ENCODE measurements at regions of chr2 and their contacts with region 1.

Region 1: DNA sequence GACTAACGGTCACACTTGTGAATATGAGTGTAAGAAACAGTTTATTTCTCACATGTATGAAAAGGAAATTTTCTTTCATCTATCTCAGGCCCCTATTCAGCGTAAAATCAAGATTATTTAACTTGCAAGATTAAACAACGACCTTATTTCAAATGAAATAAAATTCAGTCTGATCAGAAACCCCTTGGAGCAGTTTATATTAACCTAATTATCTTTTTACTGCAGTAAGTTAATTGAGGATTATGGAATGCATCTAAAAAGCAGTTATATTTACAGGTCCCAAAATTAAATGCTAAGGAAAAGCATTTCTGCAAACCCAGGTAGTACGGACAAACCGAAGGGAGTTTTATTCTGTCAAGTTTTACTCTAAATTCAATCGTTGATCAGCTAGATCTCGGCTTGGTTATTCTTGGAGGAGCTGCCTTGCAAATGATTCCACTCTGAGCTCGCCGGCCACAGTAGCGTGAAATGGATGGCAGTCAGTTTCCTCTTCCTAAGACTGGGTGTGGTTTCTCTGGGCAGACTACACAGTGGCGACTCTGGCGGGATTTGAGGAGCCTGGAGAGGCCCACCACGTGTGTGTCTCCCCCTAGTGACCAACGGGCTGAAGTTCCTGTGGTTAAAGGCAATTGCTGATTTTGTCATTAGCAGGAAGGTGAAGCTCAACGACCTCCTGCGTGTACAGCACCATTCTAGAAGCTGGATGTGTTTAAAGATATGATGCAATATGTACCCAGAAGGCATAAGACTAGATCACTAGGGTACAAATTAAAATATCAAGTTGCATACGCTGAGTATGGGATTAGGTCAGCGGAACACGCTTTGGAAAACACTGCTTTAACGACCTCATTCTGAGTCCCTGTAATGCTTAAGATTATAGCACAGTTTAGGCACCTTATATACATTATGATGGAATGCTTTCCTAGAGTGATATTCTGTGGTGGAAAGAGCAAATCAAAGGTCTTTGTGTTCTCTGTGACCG is 36.4 kb downstream of the PRKRA start:
- DNase-seq: peak; percentile 90
- ATAC-seq: peak; percentile 96
- H3K4me3 ChIP-seq: peak overlapping the region; percentile 60 to 75 (median 65)
- H3K27ac ChIP-seq: no peak overlapping the region
- H3K4me1 ChIP-seq: peaks cover 16% of the 10 kb centered on the region; the same call in 1 of the 2 replicates
- H3K27me3 ChIP-seq: peaks cover 0 to 9% of the 10 kb centered on the region in 2 experiments; a peak in 1 of 5 replicates
- CTCF ChIP-seq: peak; percentile 97
- EP300 ChIP-seq: no peak; a peak in 1 of 4 replicates
- POLR2A ChIP-seq: no peak
- RAD21 ChIP-seq: peak; percentile 86

Region 2: DNA sequence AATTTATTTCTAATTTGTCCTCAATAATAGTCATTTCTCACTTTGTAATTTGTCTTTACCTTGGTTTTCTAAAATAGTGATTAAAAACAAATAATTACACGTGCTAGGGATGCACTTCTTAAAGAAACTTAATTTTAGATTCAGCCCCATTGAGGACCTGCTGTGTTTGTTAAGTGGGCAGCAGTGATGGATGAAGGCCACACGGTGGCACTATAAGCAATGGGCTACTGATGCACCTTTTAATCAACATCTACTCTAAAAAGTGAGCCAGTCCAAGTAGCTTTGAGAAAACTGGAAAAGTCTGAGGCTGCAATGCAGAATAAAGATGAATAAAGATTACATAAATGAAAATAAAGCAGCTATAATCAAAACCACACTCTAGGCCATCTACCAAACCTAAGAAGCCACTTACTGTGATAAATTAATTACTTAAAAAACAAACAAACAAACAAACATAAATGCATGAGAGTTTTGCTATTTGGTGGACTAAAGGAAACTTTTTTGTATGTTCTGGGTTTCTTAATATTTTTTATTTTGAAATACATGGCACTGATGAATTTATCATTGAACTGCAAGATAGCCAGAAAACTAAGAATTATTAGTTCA is 431.3 kb before region 1 on chr2:
- CTCF ChIA-PET with region 1: no interaction called
- POLR2A ChIA-PET with region 1: no interaction called
- in situ Hi-C with region 1: no loop called
- intact Hi-C with region 1: loop called (anchors 5 kb)
- DNase-seq: peak; percentile 53
- ATAC-seq: peak; percentile 90
- H3K4me3 ChIP-seq: no peak overlapping the region
- H3K27ac ChIP-seq: no peak overlapping the region
- H3K4me1 ChIP-seq: no peaks in the 10 kb centered on the region
- H3K27me3 ChIP-seq: no peaks in the 10 kb centered on the region
- CTCF ChIP-seq: peak; percentile 80
- EP300 ChIP-seq: no peak
- POLR2A ChIP-seq: no peak
- RAD21 ChIP-seq: peak; percentile 67

Region 3: GRCh38 chr2:178128836-178129630 is 285.5 kb before region 1 on chr2:
- CTCF ChIA-PET with region 1: interaction called, 6 read pairs
- POLR2A ChIA-PET with region 1: no interaction called
- in situ Hi-C with region 1: no loop called
- intact Hi-C with region 1: loop called (anchors 2 kb)
- DNase-seq: no peak
- ATAC-seq: no peak
- H3K4me3 ChIP-seq: no peak overlapping the region
- H3K27ac ChIP-seq: no peak overlapping the region
- H3K4me1 ChIP-seq: no peaks in the 10 kb centered on the region
- H3K27me3 ChIP-seq: no peaks in the 10 kb centered on the region
- CTCF ChIP-seq: no peak
- EP300 ChIP-seq: no peak
- POLR2A ChIP-seq: no peak
- RAD21 ChIP-seq: no peak

Region 4: DNA sequence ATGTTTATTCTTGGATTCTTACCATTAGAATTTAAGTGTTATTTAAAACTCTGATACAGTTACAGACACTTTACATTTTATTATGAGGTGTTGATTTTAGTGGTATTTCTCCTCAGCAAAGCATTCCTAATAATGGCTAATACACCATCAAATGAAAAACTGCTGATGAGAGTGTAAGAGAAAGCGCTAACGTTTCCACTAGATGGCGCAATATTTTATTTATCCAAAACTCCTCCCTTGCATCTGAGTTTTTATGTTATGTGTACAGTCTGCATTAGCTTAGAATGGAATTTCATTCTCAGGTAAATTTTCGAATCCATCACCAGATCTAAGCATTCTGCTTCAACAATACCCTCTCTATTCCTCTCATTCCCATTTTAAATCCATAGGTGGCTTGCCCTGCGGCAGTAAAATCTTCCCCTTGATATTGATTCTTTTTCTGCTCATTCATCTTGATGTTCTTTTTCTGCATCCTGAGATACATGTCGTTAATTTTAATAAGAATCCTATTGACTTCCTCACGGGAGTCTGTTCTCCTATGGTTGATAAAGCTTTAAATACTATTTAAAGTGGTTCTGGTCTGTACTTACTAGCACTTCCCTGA is 17.5 kb before region 1 on chr2:
- CTCF ChIA-PET with region 1: interaction called, 24 read pairs
- POLR2A ChIA-PET with region 1: interaction called, 3 read pairs
- in situ Hi-C with region 1: no loop called
- intact Hi-C with region 1: loop called (anchors 1 kb)
- DNase-seq: peak; percentile 46
- ATAC-seq: peak; percentile 84
- H3K4me3 ChIP-seq: no peak overlapping the region
- H3K27ac ChIP-seq: no peak overlapping the region
- H3K4me1 ChIP-seq: no peaks in the 10 kb centered on the region
- H3K27me3 ChIP-seq: no peaks in the 10 kb centered on the region
- CTCF ChIP-seq: peak; percentile 68
- EP300 ChIP-seq: no peak
- POLR2A ChIP-seq: no peak
- RAD21 ChIP-seq: no peak

Region 5: DNA sequence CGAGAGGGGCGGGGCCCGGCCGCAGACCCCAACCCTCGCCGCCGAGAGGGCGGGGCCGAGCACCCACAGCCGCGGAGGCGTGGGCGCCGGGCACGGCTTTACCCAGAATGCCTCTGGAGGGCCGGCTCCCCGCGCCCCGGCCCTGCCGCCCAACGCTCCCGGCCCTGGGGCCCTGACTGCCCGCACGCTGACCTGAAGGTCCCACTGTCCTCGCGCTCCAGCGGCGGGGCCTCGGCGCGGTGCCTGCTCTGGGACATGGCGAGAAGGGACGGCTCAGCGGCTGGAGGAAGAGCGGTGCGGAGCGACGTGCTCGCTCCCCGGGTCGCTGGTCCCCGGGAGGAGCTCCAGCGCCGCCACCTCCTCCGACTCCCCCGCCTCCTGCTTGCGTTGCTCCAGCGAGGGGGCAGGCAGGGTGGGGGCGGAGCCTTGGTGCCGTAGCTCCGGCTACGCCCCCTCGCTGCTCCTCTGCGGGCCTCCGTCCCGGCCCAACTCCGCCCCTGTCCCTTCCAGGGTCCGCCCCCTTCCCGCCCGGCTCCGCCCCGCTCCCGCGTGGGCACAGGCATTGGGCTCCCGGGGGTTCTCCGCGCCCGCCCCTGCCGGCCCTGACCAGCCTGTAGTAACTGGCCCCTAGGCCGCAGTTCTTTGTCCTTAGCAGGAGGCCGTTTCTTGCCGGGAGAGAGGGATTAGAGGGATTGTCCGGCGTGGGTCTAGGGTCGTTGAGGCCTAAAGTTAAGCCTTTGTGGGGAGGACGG is 36.4 kb after region 1 on chr2 and contains the starts of genes PJVK and PRKRA:
- CTCF ChIA-PET with region 1: no interaction called
- POLR2A ChIA-PET with region 1: interaction called, 36 read pairs
- in situ Hi-C with region 1: no loop called
- intact Hi-C with region 1: loop called (anchors 2 kb)
- DNase-seq: peak; percentile 93
- ATAC-seq: peak; percentile 97
- H3K4me3 ChIP-seq: peak within 1 kb of the TSS; percentile 75 to 88 (median 82)
- H3K27ac ChIP-seq: peak within 1 kb of the TSS; percentile 96
- H3K4me1 ChIP-seq: peaks cover 33% of the 10 kb centered on the region
- H3K27me3 ChIP-seq: no peaks in the 10 kb centered on the region; a peak in 1 of 5 replicates
- CTCF ChIP-seq: peak; percentile 43
- EP300 ChIP-seq: peak in 1 of 2 experiments; percentile 14; a peak in 1 of 4 replicates
- POLR2A ChIP-seq: peak; percentile 93 to 97
- RAD21 ChIP-seq: peak; percentile 80
- total RNA-seq, gene PJVK: 1.1 and 1.2 TPM in 2 replicates
- total RNA-seq, gene PRKRA: 67.6 and 74.7 TPM in 2 replicates

Measured in HepG2 (cell line).